Heart right ventricle (tissue), 16 donors: ENCODE measurements at regions of chr11 and their contacts with region 1.

Region 1: DNA sequence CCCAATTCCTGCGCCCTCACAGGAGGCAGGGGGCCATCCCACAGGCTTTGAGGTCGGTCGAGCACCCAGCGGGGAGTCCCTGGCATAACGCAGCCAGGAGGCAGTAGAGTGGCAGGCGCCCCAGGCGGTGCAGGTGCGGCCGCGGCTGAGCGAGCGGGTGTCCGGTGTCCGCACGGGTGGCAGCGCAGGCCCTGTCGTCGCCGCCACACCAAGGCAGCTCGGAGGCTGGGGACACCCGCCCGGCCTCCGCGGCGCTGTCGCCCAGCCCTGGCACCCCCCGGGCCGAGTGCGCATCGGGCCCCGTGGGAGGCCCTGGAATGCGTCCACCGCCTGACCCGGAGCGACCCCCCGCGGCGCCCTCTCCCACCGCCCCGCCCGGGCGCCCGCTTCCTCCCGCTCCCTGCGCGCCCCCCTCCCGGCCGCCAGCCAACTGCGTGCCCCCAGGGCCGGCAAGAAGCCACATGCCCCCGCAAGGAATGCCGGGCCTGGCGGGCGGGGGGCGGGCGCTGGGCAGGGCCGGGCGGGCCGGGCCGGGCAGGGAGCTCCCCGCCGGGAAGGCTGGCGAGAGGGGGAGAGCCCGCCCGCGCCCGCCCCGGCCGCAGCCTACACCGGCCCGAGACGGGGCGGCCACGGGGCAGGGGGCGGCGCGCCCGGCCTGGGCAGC is 33.9 kb downstream of the PRDM11 start:
- DNase-seq: peak in 1 of 2 donors; percentile 67
- ATAC-seq: peak; percentile 56 to 80 (median 69)
- H3K4me3 ChIP-seq: peak overlapping the region; percentile 31 to 68 (median 54)
- H3K27ac ChIP-seq: peak overlapping the region; percentile 81 to 91 (median 88)
- H3K4me1 ChIP-seq: peaks cover 15 to 52% (median 26%) of the 10 kb centered on the region in 9 donors
- H3K27me3 ChIP-seq: peaks cover 0 to 20% (median 0%) of the 10 kb centered on the region in 7 donors
- CTCF ChIP-seq: peak in 8 of 9 donors; percentile 26 to 66 (median 46)

Region 2: GRCh38 chr11:45147017-45147728 is 33.1 kb before region 1 on chr11:
- intact Hi-C with region 1: loop called in 7 of 10 experiments (anchors 2 to 5 kb)
- DNase-seq: peak; percentile 94 to 96
- ATAC-seq: peak; percentile 94 to 99 (median 98)
- H3K4me3 ChIP-seq: peak overlapping the region; percentile 49 to 96 (median 76)
- H3K27ac ChIP-seq: peak overlapping the region; percentile 94 to 100 (median 99)
- H3K4me1 ChIP-seq: peaks cover 6 to 39% (median 22%) of the 10 kb centered on the region in 9 donors
- H3K27me3 ChIP-seq: peaks cover 0 to 16% (median 0%) of the 10 kb centered on the region in 7 donors
- CTCF ChIP-seq: peak in 4 of 9 donors; percentile 8 to 48 (median 38)

Region 3: DNA sequence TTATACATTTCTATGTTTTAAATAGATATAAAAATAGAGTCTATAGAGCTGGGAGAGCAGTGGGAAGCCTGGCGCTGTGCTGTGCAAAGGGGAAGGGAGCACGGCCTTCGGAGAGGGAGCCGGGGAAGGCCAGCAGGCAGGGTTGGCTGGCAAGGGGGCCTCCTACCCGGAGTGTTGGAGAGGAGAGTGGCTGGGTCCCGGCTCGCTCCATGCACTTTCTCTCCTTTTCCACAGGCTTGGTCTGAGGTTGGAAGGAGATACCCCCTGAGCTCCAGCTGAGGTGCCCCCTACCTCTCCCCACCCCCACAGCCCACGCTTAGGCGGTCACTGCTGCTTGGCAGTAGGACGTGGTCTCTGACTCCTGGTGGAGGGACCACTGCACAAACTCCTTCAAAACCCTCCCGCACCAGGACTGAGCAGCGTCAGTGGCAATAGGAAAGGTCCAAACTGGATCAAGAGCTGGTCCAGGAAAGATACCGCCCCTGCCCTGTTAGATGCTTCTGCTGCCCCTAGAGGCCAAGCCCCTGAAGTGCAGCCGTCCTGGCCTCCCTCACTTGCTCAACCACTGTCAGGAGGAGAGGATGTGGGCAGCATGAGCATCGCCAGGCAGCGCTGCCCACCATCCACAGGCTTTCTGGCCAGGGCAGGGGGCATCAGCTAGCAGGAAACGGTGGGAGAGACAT is 53.0 kb after region 1 on chr11:
- intact Hi-C with region 1: loop called in 2 of 10 experiments (anchors 10 kb)
- DNase-seq: peak; percentile 66 to 71
- ATAC-seq: peak; percentile 46 to 81 (median 74)
- H3K4me3 ChIP-seq: no peak overlapping the region
- H3K27ac ChIP-seq: no peak overlapping the region
- H3K4me1 ChIP-seq: peaks cover 0 to 3% (median 0%) of the 10 kb centered on the region in 9 donors
- H3K27me3 ChIP-seq: peaks cover 0 to 7% (median 0%) of the 10 kb centered on the region in 7 donors
- CTCF ChIP-seq: peak; percentile 79 to 87 (median 84)

Region 4: DNA sequence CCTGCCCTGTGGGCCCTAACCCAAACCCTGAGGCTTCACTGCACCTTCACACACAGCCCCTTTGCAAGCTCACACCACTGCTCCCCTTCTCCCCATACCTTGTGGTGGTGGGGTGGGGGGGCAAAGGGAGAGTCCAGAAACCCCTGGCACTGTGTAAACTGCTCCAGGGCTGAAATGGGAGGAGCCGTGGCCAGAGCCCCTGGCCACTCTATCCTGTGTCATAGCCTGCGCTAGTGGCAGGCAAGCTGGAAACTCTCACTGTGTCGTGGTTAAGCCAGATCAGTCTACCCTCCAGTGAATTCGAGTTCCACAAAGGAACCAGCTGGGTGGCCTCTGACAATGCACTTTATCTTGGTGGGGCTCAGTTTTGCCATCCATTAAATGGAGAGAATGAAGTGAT is 114.2 kb after region 1 on chr11:
- intact Hi-C with region 1: loop called in 2 of 10 experiments (anchors 1 to 5 kb)
- DNase-seq: no peak
- ATAC-seq: peak in 1 of 8 donors; percentile 57
- H3K4me3 ChIP-seq: no peak overlapping the region
- H3K27ac ChIP-seq: no peak overlapping the region
- H3K4me1 ChIP-seq: no peaks in the 10 kb centered on the region
- H3K27me3 ChIP-seq: peaks cover 0 to 40% (median 22%) of the 10 kb centered on the region in 7 donors
- CTCF ChIP-seq: no peak